Activated CD4-positive, alpha-beta memory T cell treated with anti-CD3 and anti-CD28 coated beads for 36 hours (primary cell): ENCODE measurements at regions of chr5 and their contacts with region 1.

Region 1: DNA sequence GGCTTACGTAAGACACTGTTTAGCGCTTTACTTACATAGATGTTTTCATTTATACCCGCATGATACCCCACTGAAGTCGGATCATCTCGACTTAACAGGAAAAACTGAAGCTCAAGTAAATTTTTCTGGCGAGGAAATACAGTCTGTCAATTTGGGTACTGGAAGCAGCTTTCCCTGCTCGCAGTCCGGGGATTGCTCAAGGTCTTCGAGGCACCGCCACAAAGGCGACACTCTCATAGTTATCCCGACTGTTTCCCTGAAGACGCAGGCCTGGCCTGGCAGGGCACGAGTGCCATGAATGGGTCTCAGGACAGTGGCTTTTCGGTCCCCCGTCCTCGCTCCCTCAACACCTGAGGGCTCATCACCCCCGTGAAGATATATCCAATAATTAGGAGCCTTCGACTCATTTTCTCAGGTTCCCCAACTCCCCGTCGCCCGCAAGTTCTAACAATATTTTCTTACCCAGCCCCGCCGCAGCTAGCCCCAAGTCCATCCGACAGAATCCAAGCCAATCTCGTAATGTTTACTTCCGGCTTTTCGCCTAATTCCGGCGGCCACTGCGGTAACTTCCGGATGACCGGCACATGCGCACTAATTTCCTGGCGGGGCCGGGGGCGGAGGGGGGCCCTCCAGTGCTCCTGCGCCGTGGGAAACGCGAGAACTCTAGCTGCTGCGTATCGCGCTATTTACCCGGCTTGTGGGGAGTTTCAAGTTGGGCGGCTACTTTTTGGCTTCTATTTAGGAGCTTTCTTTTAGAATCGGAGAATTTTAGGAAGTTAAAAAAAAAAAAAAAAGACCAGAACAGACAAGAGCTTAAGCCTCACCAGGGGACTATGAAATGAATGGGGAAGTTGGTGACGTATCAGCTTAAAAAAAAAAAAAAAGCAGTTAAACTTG is at the start of gene SLU7:
- DNase-seq: peak; percentile 97
- H3K4me3 Mint-ChIP-seq: peak within 1 kb of the TSS; percentile 98
- H3K27ac Mint-ChIP-seq: peak within 1 kb of the TSS; percentile 93
- H3K4me1 Mint-ChIP-seq: peaks cover 52% of the 10 kb centered on the region
- H3K27me3 Mint-ChIP-seq: no peaks in the 10 kb centered on the region
- total RNA-seq, gene SLU7: 45.9 to 46.4 TPM

Region 2: DNA sequence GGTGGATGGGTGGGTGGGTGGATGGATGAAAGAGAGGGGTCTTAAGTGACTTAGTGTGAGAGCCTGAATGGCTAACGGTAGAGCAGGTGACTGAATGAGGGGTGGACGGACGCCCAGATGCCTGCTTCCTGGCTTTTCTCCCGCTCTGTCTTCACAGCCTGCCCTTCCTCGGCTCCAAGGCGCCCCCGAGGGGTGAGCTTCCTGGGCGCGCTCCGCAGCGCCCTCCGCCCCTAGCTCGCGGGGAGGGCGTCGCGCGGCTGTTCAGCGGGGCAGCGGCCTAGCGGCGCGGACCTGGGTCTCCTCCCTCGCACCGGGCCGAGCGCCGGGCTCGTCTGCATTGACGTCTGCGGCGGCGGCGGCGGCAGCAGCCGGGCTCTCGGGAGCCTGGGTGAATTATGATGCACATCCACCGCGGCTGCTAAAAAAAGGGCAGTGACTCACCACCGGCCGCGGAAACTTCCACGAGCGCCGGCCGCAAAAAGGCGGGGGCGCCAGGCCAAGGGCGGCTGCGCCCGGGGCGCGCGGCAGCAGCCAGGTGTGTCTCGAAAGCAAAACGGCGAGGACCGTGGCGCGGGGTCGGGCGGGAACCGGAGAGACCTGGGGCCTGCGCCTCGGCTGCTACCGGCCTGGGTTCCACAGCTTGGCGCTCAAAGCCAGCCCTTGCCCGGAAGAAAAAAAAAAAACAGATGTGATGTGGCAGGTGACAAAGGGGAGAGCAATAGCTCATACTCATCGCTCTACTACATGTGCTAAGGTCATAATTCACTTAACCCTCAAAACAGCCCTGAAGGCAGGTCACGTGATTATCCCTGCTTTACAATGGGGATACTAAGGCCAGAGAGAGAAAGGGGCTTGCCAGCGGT is 645.5 kb before region 1 on chr5:
- CTCF ChIA-PET with region 1: no interaction called
- POLR2A ChIA-PET with region 1: no interaction called
- intact Hi-C with region 1: loop called (anchors 10 kb)
- DNase-seq: peak; percentile 92
- H3K4me3 Mint-ChIP-seq: peak overlapping the region; percentile 39
- H3K27ac Mint-ChIP-seq: peak overlapping the region; percentile 69
- H3K4me1 Mint-ChIP-seq: peaks cover 14% of the 10 kb centered on the region
- H3K27me3 Mint-ChIP-seq: peaks cover 45% of the 10 kb centered on the region

Region 3: DNA sequence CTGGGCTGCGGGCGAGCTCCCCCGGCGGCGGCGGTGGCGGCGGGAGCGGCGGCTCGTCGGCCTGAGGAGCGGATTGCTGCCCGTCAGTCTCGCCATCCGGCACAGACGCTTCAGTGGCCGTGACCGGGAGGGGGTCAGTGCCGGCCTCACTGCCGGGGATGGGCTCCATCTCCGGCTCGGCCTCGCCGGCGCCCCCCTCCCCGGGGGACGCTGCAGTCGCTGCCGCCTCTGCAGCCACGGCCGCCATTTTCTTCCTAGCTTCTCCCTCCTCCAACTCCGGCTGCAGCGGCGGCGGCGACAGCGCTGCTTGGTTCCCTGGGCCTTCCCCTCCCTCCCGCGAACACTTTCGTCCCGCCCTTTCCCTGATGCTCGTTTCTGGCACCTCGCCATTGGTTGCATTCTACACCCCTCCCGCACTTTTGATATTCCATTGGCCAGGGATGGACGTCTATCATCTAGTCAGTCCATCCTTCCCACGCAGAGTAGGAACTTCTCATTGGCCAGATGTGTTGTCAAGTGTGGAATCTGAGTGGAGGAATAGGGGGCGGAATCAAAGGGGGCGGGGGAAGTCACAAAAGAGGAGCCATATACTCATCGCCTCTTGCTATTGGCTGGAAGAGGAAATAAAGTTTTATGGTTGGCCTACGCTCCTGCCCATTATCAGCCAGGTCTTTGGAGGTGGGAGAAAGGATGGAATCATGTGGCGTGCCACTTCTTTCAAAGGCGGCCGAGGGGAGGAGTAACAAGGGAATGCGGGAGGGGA is 299.5 kb before region 1 on chr5 and contains the start of gene PWWP2A:
- CTCF ChIA-PET with region 1: no interaction called
- POLR2A ChIA-PET with region 1: interaction called, 3 read pairs
- intact Hi-C with region 1: loop called (anchors 1 kb)
- DNase-seq: peak; percentile 98
- H3K4me3 Mint-ChIP-seq: peak within 1 kb of the TSS; percentile 97
- H3K27ac Mint-ChIP-seq: peak within 1 kb of the TSS; percentile 96
- H3K4me1 Mint-ChIP-seq: peaks cover 10% of the 10 kb centered on the region
- H3K27me3 Mint-ChIP-seq: no peaks in the 10 kb centered on the region
- total RNA-seq, gene PWWP2A: 15.7 to 17.4 TPM

Region 4: DNA sequence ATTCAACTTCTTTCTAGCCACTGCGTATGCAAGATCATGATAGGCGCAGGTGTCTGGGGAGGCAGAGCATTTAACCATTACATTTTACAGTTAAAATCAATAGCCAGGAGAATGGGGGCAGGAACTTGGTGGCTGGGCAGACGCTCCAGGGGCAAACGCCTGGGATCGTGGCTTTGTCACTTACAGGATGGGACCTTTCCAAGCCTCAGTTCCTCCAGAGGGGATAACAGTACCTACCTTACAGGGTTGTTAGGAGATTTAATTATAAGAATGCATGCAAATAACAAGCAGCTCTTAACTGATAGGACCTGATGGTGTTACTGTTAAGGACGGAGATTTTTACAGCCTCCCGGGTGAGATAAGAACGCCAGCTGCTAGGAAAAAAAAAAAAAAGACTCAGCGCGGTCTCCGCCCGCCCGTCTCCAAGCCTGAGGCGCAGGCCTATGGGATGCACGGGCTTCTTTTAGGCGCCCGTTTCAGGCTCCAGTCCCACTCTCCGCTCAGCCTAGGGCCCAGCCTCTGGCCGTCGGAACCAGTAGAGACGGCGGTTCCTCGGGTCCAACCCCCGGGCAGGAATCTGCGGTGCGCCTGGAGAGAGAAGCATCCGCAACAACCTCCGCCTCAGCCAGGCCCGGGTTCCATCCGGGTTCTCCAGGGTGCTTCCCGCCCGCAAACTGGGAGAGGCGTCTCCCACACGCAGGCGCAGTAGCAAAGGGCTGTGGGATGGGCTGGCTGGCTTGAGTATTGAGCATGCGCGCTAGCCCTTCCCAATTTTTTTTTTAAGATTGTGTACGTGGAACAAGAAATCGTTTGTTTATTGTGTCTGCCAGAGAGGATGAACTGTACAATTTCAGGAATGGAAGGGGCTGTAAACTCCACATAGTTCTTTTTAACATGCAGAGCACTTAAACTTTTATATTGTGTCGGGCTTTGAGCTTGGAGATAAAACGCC is 19.1 kb before region 1 on chr5 and contains the start of gene FAM200C:
- CTCF ChIA-PET with region 1: interaction called, 5 read pairs
- POLR2A ChIA-PET with region 1: interaction called, 6 read pairs
- intact Hi-C with region 1: loop called (anchors 1 kb)
- DNase-seq: peak; percentile 84
- H3K4me3 Mint-ChIP-seq: peak within 1 kb of the TSS; percentile 82
- H3K27ac Mint-ChIP-seq: peak within 1 kb of the TSS; percentile 73
- H3K4me1 Mint-ChIP-seq: peaks cover 17% of the 10 kb centered on the region
- H3K27me3 Mint-ChIP-seq: no peaks in the 10 kb centered on the region
- total RNA-seq, gene FAM200C: 1.1 to 1.4 TPM

Region 5: GRCh38 chr5:160467555-160468362 is 49.0 kb after region 1 on chr5:
- CTCF ChIA-PET with region 1: interaction called, 6 read pairs
- POLR2A ChIA-PET with region 1: interaction called, 17 read pairs
- intact Hi-C with region 1: loop called (anchors 1 kb)
- DNase-seq: peak; percentile 91
- H3K4me3 Mint-ChIP-seq: peak overlapping the region; percentile 98
- H3K27ac Mint-ChIP-seq: peak overlapping the region; percentile 98
- H3K4me1 Mint-ChIP-seq: peaks cover 65% of the 10 kb centered on the region
- H3K27me3 Mint-ChIP-seq: no peaks in the 10 kb centered on the region

Region 6: DNA sequence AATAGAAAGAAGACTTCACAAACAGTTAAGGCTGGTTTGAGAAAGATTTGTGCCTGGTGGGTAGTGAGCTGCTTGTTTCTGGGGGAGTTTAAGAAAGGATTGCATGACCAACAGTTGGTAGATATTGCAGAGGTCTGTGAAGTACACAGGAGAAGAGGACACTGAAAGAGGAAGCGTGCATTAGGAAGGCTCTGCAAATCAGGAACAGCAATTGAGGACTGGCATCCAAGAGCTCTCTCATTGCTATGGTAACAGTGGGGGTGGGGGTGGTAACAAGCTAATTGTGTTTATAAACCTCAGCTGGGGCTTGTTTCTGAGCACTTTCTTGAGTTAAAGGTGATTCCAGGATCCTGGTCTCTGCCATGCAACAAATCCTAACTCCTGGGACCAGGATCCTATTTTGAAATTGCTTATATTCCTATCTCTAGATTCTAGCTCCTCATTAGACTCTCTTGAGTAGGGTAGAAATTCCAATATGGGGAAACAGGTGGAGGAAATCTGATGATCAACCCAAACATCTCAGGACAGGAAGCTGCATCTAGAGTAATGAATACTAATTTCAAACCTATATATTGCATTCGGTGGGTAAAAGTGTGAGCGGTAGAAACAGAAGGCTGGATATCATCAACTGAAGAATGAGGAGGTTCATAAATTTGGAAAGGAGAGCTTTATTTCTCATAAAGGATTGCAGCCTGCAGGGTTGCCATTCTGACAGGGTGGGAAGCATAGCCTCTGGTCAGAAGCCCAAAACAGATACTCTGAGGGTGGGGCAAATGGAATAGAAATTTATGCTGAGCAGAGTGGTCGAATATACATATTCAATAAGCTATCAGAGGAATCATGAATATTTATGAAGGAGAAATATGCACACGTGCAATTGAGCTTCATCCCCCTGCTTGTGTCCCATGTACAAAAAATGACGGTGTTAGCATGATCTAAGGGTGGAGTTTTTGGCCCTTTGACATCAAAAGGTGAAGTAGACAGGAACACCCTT is 82.3 kb after region 1 on chr5:
- CTCF ChIA-PET with region 1: interaction called, 4 read pairs
- POLR2A ChIA-PET with region 1: no interaction called
- intact Hi-C with region 1: loop called (anchors 2 kb)
- DNase-seq: no peak
- H3K4me3 Mint-ChIP-seq: no peak overlapping the region
- H3K27ac Mint-ChIP-seq: no peak overlapping the region
- H3K4me1 Mint-ChIP-seq: peaks cover 17% of the 10 kb centered on the region
- H3K27me3 Mint-ChIP-seq: no peaks in the 10 kb centered on the region

Region 7: GRCh38 chr5:160539431-160539830 is 120.6 kb after region 1 on chr5:
- CTCF ChIA-PET with region 1: no interaction called
- POLR2A ChIA-PET with region 1: no interaction called
- intact Hi-C with region 1: loop called (anchors 1 kb)
- DNase-seq: peak; percentile 84
- H3K4me3 Mint-ChIP-seq: no peak overlapping the region
- H3K27ac Mint-ChIP-seq: no peak overlapping the region
- H3K4me1 Mint-ChIP-seq: peaks cover 24% of the 10 kb centered on the region
- H3K27me3 Mint-ChIP-seq: no peaks in the 10 kb centered on the region